AG04449 (cell line): ENCODE measurements at regions of chr1 and their contacts with region 1.

Region 1: GRCh38 chr1:42146626-42147320 is 6.4 kb upstream of the GUCA2B start:
- DNase-seq: no peak
- H3K4me3 ChIP-seq: no peak overlapping the region
- CTCF ChIP-seq: peak; percentile 80

Region 2: GRCh38 chr1:41802532-41803501 is 344.0 kb before region 1 on chr1:
- CTCF ChIA-PET with region 1: no interaction called
- POLR2A ChIA-PET with region 1: no interaction called
- DNase-seq: no peak
- H3K4me3 ChIP-seq: no peak overlapping the region
- CTCF ChIP-seq: no peak

Region 3: GRCh38 chr1:42133809-42134526 is 12.8 kb before region 1 on chr1:
- CTCF ChIA-PET with region 1: interaction called, 11 read pairs
- POLR2A ChIA-PET with region 1: no interaction called
- DNase-seq: no peak
- H3K4me3 ChIP-seq: no peak overlapping the region
- CTCF ChIP-seq: no peak

Region 4: GRCh38 chr1:42157667-42158066 is 10.9 kb after region 1 on chr1:
- CTCF ChIA-PET with region 1: interaction called, 19 read pairs
- POLR2A ChIA-PET with region 1: no interaction called
- DNase-seq: no peak
- H3K4me3 ChIP-seq: no peak overlapping the region
- CTCF ChIP-seq: no peak

Region 5: GRCh38 chr1:42195841-42196240 is 49.1 kb after region 1 on chr1:
- CTCF ChIA-PET with region 1: no interaction called
- POLR2A ChIA-PET with region 1: no interaction called
- DNase-seq: no peak
- H3K4me3 ChIP-seq: no peak overlapping the region
- CTCF ChIP-seq: no peak

Region 6: DNA sequence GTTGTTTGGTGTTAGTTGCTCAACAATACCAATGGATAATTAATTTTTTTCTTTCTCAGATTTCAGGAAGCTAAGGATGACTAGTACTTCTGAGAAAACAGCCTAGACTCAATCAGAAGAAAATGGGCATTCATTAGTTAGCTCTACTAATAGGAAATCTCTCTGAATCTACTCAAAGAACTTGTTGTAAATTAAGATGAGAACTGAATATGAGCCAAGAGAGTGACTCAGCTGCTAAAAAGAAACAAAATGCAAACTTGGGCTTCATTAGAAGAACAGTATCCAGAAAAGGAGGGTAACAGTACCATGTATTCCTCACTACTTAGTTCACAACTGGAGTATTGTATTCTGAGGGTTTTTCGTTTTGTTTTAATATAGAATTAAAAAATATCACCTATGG is 175.8 kb after region 1 on chr1:
- CTCF ChIA-PET with region 1: no interaction called
- POLR2A ChIA-PET with region 1: no interaction called
- DNase-seq: no peak
- H3K4me3 ChIP-seq: no peak overlapping the region
- CTCF ChIP-seq: no peak

Region 7: GRCh38 chr1:42358791-42359190 is 212.0 kb after region 1 on chr1:
- CTCF ChIA-PET with region 1: no interaction called
- POLR2A ChIA-PET with region 1: no interaction called
- DNase-seq: no peak
- H3K4me3 ChIP-seq: no peak overlapping the region
- CTCF ChIP-seq: no peak